ENCODE measurements at regions of chr2 and their contacts with region 1.

Region 1: DNA sequence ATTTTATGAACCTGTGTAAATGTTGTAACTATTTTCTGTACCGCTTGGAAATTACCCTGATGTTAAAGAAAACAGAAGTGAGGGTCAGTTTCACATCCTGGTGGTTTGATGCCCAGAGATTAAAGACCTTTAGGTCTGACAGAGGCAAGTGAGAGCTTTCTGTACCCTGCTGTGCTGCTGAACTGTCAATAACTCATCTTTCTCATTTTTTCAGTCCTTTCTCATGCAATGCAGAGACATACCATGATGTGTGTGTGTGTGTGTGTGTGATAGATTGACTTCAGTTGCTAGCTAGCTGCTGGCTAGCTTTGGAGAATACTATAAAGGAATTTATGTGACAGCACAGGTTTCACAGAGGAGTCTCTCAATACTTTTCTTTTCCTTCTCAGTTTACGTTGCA is 2025.6 kb upstream of the LRRTM1 start:
- DNase-seq: no peak
- ATAC-seq: no peak
- H3K4me3 ChIP-seq: no peak overlapping the region
- H3K27ac ChIP-seq: no peak overlapping the region
- H3K4me1 ChIP-seq: no peaks in the 10 kb centered on the region
- H3K27me3 ChIP-seq: no peaks in the 10 kb centered on the region
- CTCF ChIP-seq: no peak
- POLR2A ChIP-seq: no peak
- RAD21 ChIP-seq: no peak

Region 2: GRCh38 chr2:82340578-82341053 is 10.5 kb after region 1 on chr2:
- CTCF ChIA-PET with region 1: no interaction called
- POLR2A ChIA-PET with region 1: no interaction called
- RAD21 ChIA-PET with region 1: no interaction called
- intact Hi-C with region 1: loop called (anchors 1 kb)
- DNase-seq: no peak
- ATAC-seq: no peak
- H3K4me3 ChIP-seq: no peak overlapping the region
- H3K27ac ChIP-seq: no peak overlapping the region
- H3K4me1 ChIP-seq: no peaks in the 10 kb centered on the region
- H3K27me3 ChIP-seq: no peaks in the 10 kb centered on the region
- CTCF ChIP-seq: no peak
- POLR2A ChIP-seq: no peak
- RAD21 ChIP-seq: no peak

Region 3: GRCh38 chr2:82527124-82527523 is 197.0 kb after region 1 on chr2:
- CTCF ChIA-PET with region 1: no interaction called
- POLR2A ChIA-PET with region 1: no interaction called
- RAD21 ChIA-PET with region 1: no interaction called
- intact Hi-C with region 1: no loop called
- DNase-seq: no peak
- ATAC-seq: no peak
- H3K4me3 ChIP-seq: no peak overlapping the region
- H3K27ac ChIP-seq: no peak overlapping the region
- H3K4me1 ChIP-seq: no peaks in the 10 kb centered on the region
- H3K27me3 ChIP-seq: no peaks in the 10 kb centered on the region
- CTCF ChIP-seq: no peak
- POLR2A ChIP-seq: no peak
- RAD21 ChIP-seq: no peak